BJ (cell line): ENCODE measurements at regions of chr17 and their contacts with region 1.

Region 1: GRCh38 chr17:38351412-38352222 is at the start of gene SOCS7:
- DNase-seq: peak; percentile 41
- H3K4me3 ChIP-seq: peak within 1 kb of the TSS; percentile 83
- H3K27me3 ChIP-seq: no peaks in the 10 kb centered on the region
- CTCF ChIP-seq: no peak
- polyA plus RNA-seq, gene SOCS7: 7.4 and 9.2 TPM in 2 replicates

Region 2: GRCh38 chr17:38333635-38334295 is 17.9 kb before region 1 on chr17:
- CTCF ChIA-PET with region 1: interaction called, 30 read pairs
- POLR2A ChIA-PET with region 1: no interaction called
- DNase-seq: no peak
- H3K4me3 ChIP-seq: no peak overlapping the region
- H3K27me3 ChIP-seq: peaks cover 19% of the 10 kb centered on the region
- CTCF ChIP-seq: peak; percentile 71

Region 3: DNA sequence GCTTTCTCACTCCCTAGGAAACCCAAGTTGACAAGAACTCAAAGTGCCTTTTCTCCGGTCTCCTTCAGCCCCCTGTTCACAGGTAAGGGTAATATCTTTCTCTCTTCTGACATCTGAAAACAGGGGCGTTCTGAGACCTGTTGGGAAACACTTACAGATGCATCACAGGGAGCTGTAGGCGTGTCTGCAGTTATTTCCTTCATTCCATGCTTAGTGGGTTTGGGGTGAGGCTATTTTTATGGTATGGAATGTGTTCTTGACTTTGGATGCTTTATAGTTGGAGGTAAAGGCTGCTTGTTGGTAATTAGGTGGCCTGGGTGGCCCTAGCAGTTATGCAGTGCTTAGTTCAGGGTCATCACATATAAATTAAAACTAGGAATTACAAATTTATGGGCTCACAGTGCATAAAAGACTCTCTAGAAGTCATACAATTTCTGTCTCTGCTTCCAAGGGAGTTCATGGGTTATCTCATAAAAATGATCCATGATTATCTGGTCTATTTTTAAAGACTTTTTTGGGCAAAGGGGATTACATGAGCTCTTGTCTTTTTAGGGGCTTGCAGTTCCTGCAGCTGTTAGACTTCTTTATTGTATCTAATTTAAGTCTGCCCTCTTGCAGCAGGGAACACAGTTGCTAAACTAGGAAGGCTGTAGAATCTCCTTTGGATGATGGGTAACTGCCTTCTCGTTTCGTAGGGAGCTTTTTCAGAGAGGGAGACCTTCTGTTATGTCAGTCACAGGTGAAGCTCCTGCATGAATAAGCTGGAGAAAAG is 10.3 kb after region 1 on chr17:
- CTCF ChIA-PET with region 1: interaction called, 15 read pairs
- POLR2A ChIA-PET with region 1: no interaction called
- DNase-seq: no peak
- H3K4me3 ChIP-seq: no peak overlapping the region
- H3K27me3 ChIP-seq: no peaks in the 10 kb centered on the region
- CTCF ChIP-seq: no peak

Region 4: GRCh38 chr17:38415250-38416194 is 63.9 kb after region 1 on chr17:
- CTCF ChIA-PET with region 1: interaction called, 318 read pairs
- POLR2A ChIA-PET with region 1: interaction called, 3 read pairs
- DNase-seq: no peak
- H3K4me3 ChIP-seq: peak overlapping the region; percentile 32
- H3K27me3 ChIP-seq: peaks cover 25% of the 10 kb centered on the region
- CTCF ChIP-seq: no peak

Region 5: DNA sequence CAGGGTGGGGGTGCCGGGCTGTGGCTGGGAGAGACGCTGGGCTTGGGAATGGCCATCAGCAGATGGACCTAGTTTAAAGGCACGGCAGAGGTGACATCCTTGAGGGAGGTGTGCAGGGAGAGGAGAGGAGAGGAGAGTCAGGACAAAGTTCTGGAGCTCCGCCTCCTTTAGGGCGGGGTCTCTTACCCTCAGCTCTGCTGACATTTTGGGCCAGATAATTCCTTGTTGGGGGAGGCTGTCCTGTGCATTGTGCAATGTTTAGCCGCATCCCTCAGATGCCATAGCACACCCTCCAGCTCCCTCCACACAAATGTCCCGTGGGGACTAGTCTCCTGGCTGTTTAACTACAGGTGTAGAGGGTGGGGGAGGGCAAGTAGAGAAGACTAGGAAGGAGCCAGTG is 124.9 kb after region 1 on chr17:
- CTCF ChIA-PET with region 1: no interaction called
- POLR2A ChIA-PET with region 1: no interaction called
- DNase-seq: no peak
- H3K4me3 ChIP-seq: no peak overlapping the region
- H3K27me3 ChIP-seq: no peaks in the 10 kb centered on the region
- CTCF ChIP-seq: no peak

Region 6: DNA sequence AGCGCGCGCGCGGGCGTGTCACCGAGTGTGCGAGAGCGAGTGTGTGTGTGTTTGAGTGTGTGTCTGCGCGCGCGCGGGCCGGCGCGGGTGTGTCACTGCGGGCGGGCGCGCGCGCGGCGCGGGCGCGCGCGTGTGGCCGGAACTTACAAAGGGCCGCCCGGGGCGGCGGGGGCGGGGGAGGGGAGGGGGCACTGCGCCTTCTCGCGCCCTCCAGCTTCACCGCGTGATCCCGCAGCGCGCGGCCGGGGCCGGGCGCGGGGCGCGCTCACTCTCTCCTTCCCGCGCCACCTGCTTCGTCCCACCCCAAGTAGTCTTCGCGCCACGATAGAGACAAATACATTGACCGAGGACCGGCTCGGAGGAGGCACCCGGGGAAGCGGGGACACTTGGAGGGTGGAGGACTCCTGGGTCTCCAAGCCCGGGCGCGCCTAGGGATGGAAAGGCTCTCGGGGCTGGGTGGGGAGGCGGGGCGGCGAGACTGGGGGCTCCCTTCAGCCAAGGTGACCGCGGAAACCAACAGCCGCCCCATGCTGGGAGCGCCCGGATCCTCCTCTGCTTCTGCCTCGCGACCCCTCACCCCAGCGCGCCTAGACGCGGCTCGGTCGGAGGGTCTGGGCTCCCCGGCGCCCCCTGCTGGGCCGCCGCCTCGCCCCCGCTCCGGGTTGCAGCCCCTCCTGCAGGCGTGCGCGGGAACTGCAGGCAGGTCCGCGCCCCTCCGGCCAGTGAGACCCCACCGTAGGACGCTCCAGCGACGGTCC is 254.4 kb after region 1 on chr17 and contains the start of gene SRCIN1:
- CTCF ChIA-PET with region 1: no interaction called
- POLR2A ChIA-PET with region 1: no interaction called
- DNase-seq: no peak
- H3K4me3 ChIP-seq: peak within 1 kb of the TSS; percentile 42
- H3K27me3 ChIP-seq: peaks cover 47% of the 10 kb centered on the region
- CTCF ChIP-seq: peak; percentile 60
- polyA plus RNA-seq, gene SRCIN1: not detected in 2 replicates

Region 7: DNA sequence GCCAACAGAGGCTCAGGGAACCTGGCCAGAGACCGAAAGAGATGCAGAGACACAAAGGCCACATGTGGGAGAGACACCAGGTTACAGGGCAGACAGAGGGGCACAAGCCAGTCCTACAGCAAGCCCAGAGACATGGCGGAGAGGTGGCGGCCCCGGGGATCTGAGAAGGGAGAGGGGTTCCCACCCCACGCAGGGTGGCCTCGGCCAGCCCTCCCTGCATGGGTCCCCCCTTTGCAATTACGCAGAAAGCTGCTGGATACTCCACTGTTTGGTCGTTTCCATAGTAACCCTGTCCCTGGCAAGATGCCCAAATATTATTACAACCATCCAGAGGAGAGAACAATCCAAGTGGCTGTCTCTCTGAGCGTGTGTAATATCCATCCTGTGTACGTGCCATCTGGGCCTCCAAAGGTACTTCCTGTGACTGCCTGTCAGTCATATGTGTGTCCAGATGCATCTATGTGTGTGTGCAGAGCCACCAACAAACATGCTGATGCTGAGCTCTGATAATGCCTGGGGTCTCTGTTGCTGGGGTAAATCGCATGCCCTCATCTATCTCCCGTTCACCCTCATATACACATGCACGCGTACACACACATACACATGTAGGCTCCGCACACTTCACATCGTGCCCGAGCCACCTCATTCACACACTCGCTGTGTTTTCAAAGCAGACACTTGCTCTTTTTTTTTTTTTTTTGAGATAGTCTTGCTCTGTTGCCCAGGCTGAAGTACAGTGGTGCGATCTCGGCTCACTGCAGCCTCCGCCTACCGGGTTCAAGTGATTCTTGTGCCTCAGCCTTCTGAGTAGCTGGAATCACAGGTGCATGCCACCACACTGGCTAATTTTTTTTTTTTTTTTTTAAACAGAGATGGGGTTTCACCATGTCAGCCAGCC is 391.0 kb after region 1 on chr17:
- CTCF ChIA-PET with region 1: no interaction called
- POLR2A ChIA-PET with region 1: interaction called, 11 read pairs
- DNase-seq: peak; percentile 63
- H3K4me3 ChIP-seq: no peak overlapping the region
- H3K27me3 ChIP-seq: no peaks in the 10 kb centered on the region
- CTCF ChIP-seq: no peak